ENCODE measurements at regions of chrX and their contacts with region 1.

Region 1: DNA sequence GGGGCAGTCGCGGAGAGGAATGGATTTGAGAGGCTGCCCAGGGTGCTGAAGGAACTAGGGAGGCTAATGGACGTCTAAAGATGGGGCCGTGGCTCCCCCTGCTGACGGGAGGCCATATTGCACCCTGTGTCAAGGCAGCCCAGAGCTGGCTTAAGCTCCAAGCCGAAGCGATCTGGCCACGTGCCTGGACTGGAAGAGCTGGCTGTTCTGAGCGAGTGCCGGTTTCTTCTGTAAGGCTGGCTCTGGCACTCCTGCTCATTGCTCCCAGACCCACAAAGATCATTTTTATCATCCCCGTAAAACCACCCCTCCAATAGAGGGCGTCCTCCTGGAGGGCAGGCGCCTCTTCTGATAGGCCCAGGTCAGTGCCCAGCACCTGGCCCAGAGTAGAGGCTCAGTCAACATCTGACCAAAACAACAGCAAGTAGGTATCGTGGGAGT is 5.6 kb downstream of the PNCK start:
- DNase-seq: peak; percentile 73 to 98 (median 90)

Region 2: GRCh38 chrX:153539171-153539978 is 128.6 kb before region 1 on chrX:
- intact Hi-C with region 1: loop called (anchors 5 kb)
- DNase-seq: peak; percentile 55 to 97 (median 78)

Region 3: DNA sequence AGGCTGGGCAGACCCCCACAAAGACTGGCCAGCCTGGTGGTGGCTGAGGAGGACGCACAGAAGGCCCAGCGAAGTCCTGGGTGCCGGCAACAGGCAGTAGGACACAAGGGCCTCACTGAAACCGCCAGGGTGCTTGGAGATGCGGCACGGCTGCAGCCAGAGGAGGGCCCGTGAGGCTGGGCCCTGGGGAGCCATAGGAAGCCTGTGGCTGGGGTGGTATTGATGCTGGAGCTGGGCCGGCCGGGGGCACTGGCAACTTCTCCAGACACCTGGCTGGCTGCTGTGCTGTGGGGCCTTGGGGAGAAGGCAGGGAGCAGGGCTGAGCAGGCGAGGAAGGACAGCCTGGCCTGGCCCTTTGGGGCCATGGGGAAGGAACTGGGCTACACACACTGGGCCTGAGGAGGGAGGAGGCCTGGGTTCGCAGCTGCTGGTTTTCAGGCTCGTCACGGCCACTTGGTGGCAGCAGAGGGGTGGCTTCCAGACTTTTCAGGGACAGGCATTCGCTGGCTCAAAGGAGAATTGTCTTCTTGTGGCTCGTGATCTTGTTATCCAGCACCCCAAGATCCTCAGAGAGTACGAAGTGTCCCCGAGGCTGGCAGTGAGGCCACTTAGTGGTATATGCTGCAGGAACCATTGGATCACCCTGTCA is 113.3 kb before region 1 on chrX:
- intact Hi-C with region 1: loop called (anchors 1 kb)
- DNase-seq: peak; percentile 70 to 97 (median 84)

Region 4: DNA sequence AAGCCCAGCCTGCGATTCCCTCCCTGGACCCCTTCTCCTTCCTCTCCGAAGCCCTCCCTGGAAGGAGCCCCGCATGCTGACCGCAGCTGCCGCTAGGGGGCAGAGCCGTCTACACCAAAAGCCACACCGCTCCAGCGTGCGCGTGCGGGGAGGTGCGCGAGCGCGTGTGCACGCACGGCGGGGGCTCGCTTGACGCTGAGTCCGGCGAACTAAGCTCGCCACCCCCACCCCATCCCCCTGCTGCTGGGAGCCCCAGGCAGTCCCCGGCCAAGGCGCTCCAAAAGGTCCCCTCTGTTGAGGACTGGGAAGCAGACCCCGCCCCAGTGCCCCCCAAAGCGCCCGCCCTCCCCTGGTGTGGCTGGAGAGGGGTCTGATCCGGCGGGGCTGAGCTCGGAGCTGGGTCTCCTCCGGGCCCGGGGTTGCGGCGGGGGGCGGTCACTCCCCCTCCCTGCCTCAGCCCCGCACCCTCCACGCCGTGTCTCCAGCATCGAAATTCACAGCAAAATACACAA is 58.0 kb before region 1 on chrX:
- intact Hi-C with region 1: loop called (anchors 5 kb)
- DNase-seq: peak; percentile 63 to 97 (median 82)

Measured in posterior cingulate gyrus (tissue), 11 donors.